ENCODE measurements at regions of chr12 and their contacts with region 1.

Region 1: DNA sequence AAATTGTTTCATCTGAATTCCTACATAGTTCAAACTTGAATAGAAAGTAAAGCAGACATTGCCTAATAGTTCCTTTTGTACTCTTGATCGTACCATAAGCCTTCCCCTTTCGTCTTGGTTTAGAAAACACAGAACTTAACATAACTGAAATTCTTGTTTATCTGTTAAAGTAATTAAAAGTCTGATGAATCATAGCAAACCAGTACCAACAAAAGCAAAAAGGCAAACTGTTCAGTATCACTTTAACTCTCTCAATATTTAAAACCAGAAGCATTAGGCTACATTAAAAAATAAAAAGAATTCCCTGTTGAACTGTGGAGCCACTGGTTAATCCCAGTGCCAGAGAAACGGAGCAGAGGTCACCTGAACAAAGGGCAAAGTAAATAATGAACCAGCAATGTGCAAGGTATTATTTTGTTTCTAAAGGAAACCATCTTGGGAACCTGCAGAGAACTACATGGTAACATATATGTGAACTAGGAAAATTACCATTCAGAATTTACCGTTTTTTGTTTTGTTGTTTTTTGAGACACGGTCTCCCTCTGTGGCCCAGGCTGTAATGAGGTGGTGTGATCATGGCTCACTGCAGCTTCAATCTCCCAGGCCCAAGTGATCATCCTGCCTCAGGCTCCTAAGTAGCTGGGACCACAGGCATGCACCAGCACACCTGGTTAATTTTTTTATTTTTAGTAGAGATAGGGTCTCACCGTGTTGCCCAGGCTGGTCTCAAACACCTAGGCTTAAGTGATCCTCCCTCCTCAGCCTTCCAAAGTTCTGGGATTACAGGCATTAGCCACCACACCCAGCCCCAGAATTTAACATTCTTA is 17.1 kb upstream of the HIGD1C start:
- DNase-seq: no peak
- ATAC-seq: peak; percentile 53
- H3K4me3 ChIP-seq: no peak overlapping the region
- H3K27ac ChIP-seq: peak overlapping the region; percentile 7 to 42
- H3K4me1 ChIP-seq: peaks cover 3% of the 10 kb centered on the region in 2 donors
- H3K27me3 ChIP-seq: no peaks in the 10 kb centered on the region

Region 2: GRCh38 chr12:50806176-50806575 is 129.0 kb before region 1 on chr12:
- intact Hi-C with region 1: no loop called
- DNase-seq: no peak
- ATAC-seq: no peak
- H3K4me3 ChIP-seq: no peak overlapping the region
- H3K27ac ChIP-seq: no peak overlapping the region
- H3K4me1 ChIP-seq: no peaks in the 10 kb centered on the region
- H3K27me3 ChIP-seq: no peaks in the 10 kb centered on the region

Region 3: GRCh38 chr12:50981319-50982239 is 46.4 kb after region 1 on chr12:
- intact Hi-C with region 1: loop called in 1 of 2 experiments (anchors 2 kb)
- DNase-seq: no peak
- ATAC-seq: no peak
- H3K4me3 ChIP-seq: no peak overlapping the region
- H3K27ac ChIP-seq: peak overlapping the region in 1 of 2 donors; percentile 14
- H3K4me1 ChIP-seq: peaks cover 2 to 6% of the 10 kb centered on the region in 2 donors
- H3K27me3 ChIP-seq: no peaks in the 10 kb centered on the region

Measured in aorta (tissue), 5 donors.